Caco-2 (cell line): ENCODE measurements at regions of chr2 and their contacts with region 1.

Region 1: GRCh38 chr2:175180701-175181103 is 808 bp downstream of the ATP5MC3 start:
- DNase-seq: peak; percentile 38 to 53
- H3K4me3 ChIP-seq: peak overlapping the region; percentile 74
- H3K4me3 Mint-ChIP-seq: peak overlapping the region; percentile 98
- H3K27ac Mint-ChIP-seq: peak overlapping the region; percentile 87
- H3K4me1 ChIP-seq: peaks cover 4% of the 10 kb centered on the region; the same call in 1 of the 2 replicates
- H3K4me1 Mint-ChIP-seq: peaks cover 9% of the 10 kb centered on the region
- H3K27me3 ChIP-seq: no peaks in the 10 kb centered on the region
- H3K27me3 Mint-ChIP-seq: no peaks in the 10 kb centered on the region
- CTCF ChIP-seq: no peak

Region 2: DNA sequence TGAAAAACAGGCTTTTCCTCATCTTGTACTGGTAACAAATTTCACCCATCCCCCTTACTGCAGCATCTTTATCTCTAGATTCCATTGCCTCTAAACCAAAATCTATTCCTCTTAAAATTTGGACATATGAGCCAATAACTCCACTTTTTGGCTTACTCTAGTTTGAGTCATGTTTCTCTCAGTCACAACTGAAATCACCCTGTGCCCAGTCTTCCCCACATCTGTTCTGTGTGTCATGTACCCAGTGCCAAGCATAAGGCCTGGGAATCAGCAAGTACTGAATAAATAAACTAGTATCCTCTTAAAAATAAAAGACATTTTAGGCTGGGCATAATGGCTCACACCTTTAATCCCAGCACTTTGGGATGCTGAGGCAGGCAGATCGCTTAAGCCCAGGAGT is 154.8 kb before region 1 on chr2:
- CTCF ChIA-PET with region 1: no interaction called
- POLR2A ChIA-PET with region 1: no interaction called
- intact Hi-C with region 1: no loop called
- DNase-seq: no peak
- H3K4me3 ChIP-seq: no peak overlapping the region
- H3K4me3 Mint-ChIP-seq: no peak overlapping the region
- H3K27ac Mint-ChIP-seq: no peak overlapping the region
- H3K4me1 ChIP-seq: no peaks in the 10 kb centered on the region
- H3K4me1 Mint-ChIP-seq: peaks cover 6% of the 10 kb centered on the region
- H3K27me3 ChIP-seq: no peaks in the 10 kb centered on the region
- H3K27me3 Mint-ChIP-seq: no peaks in the 10 kb centered on the region
- CTCF ChIP-seq: no peak

Region 3: DNA sequence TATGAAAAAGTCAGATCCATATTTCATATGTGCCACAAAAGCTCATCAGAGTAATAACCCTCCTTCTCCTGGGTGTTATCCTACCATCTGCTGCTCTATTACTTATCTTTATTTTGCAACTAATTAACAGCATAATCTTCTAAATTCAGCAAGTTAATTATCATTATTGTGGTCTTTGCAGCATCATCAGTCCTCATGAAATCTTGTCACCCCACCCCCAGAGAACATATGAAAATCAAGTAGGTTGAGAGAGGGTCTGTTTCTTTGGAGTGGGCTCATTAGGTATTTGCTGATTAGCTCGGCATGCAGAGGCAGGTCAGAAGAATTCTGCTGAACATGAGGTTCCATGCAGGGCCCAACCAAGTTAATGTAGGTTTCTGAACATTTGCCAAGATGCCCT is 77.5 kb before region 1 on chr2:
- CTCF ChIA-PET with region 1: no interaction called
- POLR2A ChIA-PET with region 1: no interaction called
- intact Hi-C with region 1: no loop called
- DNase-seq: no peak
- H3K4me3 ChIP-seq: no peak overlapping the region
- H3K4me3 Mint-ChIP-seq: no peak overlapping the region
- H3K27ac Mint-ChIP-seq: no peak overlapping the region
- H3K4me1 ChIP-seq: no peaks in the 10 kb centered on the region
- H3K4me1 Mint-ChIP-seq: no peaks in the 10 kb centered on the region
- H3K27me3 ChIP-seq: no peaks in the 10 kb centered on the region
- H3K27me3 Mint-ChIP-seq: no peaks in the 10 kb centered on the region
- CTCF ChIP-seq: no peak

Region 4: GRCh38 chr2:175167792-175168563 is 12.7 kb before region 1 on chr2 and contains the start of gene ATF2:
- CTCF ChIA-PET with region 1: no interaction called
- POLR2A ChIA-PET with region 1: interaction called, 9 read pairs
- intact Hi-C with region 1: loop called (anchors 1 kb)
- DNase-seq: peak; percentile 99 to 100
- H3K4me3 ChIP-seq: peak within 1 kb of the TSS; percentile 75
- H3K4me3 Mint-ChIP-seq: peak within 1 kb of the TSS; percentile 98
- H3K27ac Mint-ChIP-seq: peak within 1 kb of the TSS; percentile 99
- H3K4me1 ChIP-seq: peaks cover 10% of the 10 kb centered on the region
- H3K4me1 Mint-ChIP-seq: no peaks in the 10 kb centered on the region
- H3K27me3 ChIP-seq: no peaks in the 10 kb centered on the region
- H3K27me3 Mint-ChIP-seq: no peaks in the 10 kb centered on the region
- CTCF ChIP-seq: no peak
- total RNA-seq, gene ATF2: 44.0 and 47.1 TPM in 2 replicates

Region 5: DNA sequence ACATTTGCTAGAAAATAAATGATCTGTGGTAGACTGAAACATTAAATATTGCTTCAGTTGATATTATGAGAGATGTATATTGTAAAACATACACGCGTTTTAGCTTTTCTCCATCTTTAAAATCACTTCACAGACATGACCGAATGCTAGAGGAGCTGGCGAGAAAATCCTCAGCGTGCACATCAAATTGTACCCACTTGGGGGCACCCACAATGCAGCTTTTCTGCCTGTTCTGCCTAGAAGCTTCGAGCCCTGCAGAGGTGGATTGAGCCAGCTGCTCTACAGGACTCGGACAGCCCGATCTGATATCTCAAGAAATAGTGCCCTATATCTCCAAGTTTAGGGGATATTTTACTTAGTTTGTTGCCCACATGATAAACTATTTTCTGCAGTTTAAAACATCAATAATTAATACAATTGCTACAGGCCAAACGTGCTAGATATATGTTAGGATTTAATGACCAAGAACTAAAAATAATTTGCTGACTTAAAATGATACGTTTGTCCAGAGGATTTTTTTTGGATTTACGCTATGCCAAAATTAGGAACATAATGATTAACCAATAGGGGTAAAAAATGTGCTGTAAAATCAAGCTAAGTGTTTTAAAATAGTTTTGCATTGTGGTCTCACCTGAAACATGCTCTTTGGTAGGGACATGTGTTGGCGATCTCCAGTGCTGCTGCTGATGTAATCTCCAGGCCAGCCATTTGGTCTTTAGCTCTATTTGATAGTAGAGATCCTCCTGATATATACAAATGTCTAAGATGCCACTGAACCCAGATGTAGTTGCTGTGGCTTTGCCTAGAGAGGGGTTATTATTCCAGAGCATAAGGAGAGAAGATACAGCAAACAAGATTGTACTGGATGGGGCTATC is 23.2 kb after region 1 on chr2:
- CTCF ChIA-PET with region 1: no interaction called
- POLR2A ChIA-PET with region 1: no interaction called
- intact Hi-C with region 1: no loop called
- DNase-seq: peak; percentile 66 to 71
- H3K4me3 ChIP-seq: no peak overlapping the region
- H3K4me3 Mint-ChIP-seq: no peak overlapping the region
- H3K27ac Mint-ChIP-seq: no peak overlapping the region
- H3K4me1 ChIP-seq: no peaks in the 10 kb centered on the region
- H3K4me1 Mint-ChIP-seq: peaks cover 7% of the 10 kb centered on the region
- H3K27me3 ChIP-seq: no peaks in the 10 kb centered on the region
- H3K27me3 Mint-ChIP-seq: peaks cover 10% of the 10 kb centered on the region
- CTCF ChIP-seq: peak; percentile 66 to 70